ENCODE measurements at regions of chr14 and their contacts with region 1.

Region 1: GRCh38 chr14:67619446-67620216 is at the start of gene ARG2:
- DNase-seq: peak; percentile 97 to 99 (median 99)
- H3K4me3 ChIP-seq: peak within 1 kb of the TSS; percentile 7 to 73 (median 52)
- H3K27ac ChIP-seq: peak within 1 kb of the TSS in 4 of 5 donors; percentile 60 to 82 (median 72)
- H3K4me1 ChIP-seq: peaks cover 23 to 33% of the 10 kb centered on the region in 2 donors
- H3K27me3 ChIP-seq: no peaks in the 10 kb centered on the region
- CTCF ChIP-seq: peak in 1 of 6 experiments; percentile 10
- POLR2A ChIP-seq: peak; percentile 76
- total RNA-seq, gene ARG2: 2.5 to 45.4 (median 4.5) TPM

Region 2: GRCh38 chr14:67674481-67675169 is 55.0 kb after region 1 on chr14 and contains the start of gene VTI1B:
- intact Hi-C with region 1: loop called in 1 of 2 experiments (anchors 5 kb)
- DNase-seq: peak; percentile 70 to 79 (median 77)
- H3K4me3 ChIP-seq: peak within 1 kb of the TSS; percentile 69 to 92 (median 80)
- H3K27ac ChIP-seq: peak within 1 kb of the TSS; percentile 89 to 98 (median 97)
- H3K4me1 ChIP-seq: peaks cover 16 to 43% of the 10 kb centered on the region in 2 donors
- H3K27me3 ChIP-seq: no peaks in the 10 kb centered on the region
- CTCF ChIP-seq: peak in 1 of 6 experiments; percentile 1
- POLR2A ChIP-seq: peak; percentile 27 to 40
- total RNA-seq, gene VTI1B: 52.2 to 108 (median 86.8) TPM

Region 3: DNA sequence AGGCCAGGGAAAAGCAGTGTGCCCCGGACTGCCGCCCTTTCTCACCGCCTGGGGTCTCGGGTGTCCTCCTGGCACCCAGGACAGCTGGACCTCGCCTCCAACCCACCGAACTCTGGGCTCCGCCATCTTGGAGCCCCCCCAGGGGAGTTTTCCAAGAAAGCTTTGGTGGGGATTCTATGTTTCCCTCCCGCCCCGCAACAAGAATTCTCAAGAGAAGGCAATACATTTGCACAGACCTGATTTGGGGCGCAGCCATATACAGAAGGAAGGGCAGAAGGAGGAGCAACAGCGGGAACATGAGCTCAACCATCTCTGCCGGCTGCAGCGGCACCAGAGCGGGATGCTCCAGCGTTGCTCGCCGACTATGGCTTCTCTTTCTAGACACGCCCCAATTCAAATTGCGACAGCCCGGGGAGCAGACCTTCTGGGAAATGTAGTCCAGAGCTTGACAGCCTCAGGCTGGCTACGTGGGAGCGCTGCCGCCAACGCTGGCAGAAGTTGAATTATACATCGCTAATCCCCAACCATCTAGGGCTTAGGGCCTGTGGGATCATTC is 75.8 kb after region 1 on chr14 and contains the start of gene RDH11:
- intact Hi-C with region 1: loop called (anchors 5 to 10 kb)
- DNase-seq: peak; percentile 88 to 96 (median 92)
- H3K4me3 ChIP-seq: peak within 1 kb of the TSS in 3 of 4 donors; percentile 48 to 74 (median 58)
- H3K27ac ChIP-seq: peak within 1 kb of the TSS; percentile 61 to 94 (median 89)
- H3K4me1 ChIP-seq: peaks cover 5 to 18% of the 10 kb centered on the region in 2 donors
- H3K27me3 ChIP-seq: no peaks in the 10 kb centered on the region
- CTCF ChIP-seq: no peak
- POLR2A ChIP-seq: peak; percentile 88 to 95
- total RNA-seq, gene RDH11: 73.1 to 309 (median 81.9) TPM

Region 4: GRCh38 chr14:67704484-67705089 is 85.0 kb after region 1 on chr14:
- intact Hi-C with region 1: loop called (anchors 5 to 10 kb)
- DNase-seq: peak in 3 of 7 donors; percentile 17 to 47 (median 38)
- H3K4me3 ChIP-seq: no peak overlapping the region
- H3K27ac ChIP-seq: no peak overlapping the region
- H3K4me1 ChIP-seq: no peaks in the 10 kb centered on the region
- H3K27me3 ChIP-seq: no peaks in the 10 kb centered on the region
- CTCF ChIP-seq: peak; percentile 54 to 88 (median 80)
- POLR2A ChIP-seq: no peak